Gastrocnemius medialis (tissue), 4 donors: ENCODE measurements at regions of chr4 and their contacts with region 1.

Region 1: GRCh38 chr4:38574559-38575333 is 89.3 kb upstream of the KLF3 start:
- DNase-seq: peak; percentile 81 to 90
- ATAC-seq: peak; percentile 97 to 98
- H3K4me3 ChIP-seq: peak overlapping the region in 3 of 4 donors; percentile 30 to 37 (median 30)
- H3K27ac ChIP-seq: peak overlapping the region; percentile 80 to 91 (median 85)
- H3K4me1 ChIP-seq: peaks cover 0 to 14% of the 10 kb centered on the region in 2 donors
- H3K27me3 ChIP-seq: no peaks in the 10 kb centered on the region
- CTCF ChIP-seq: no peak
- POLR2A ChIP-seq: no peak

Region 2: DNA sequence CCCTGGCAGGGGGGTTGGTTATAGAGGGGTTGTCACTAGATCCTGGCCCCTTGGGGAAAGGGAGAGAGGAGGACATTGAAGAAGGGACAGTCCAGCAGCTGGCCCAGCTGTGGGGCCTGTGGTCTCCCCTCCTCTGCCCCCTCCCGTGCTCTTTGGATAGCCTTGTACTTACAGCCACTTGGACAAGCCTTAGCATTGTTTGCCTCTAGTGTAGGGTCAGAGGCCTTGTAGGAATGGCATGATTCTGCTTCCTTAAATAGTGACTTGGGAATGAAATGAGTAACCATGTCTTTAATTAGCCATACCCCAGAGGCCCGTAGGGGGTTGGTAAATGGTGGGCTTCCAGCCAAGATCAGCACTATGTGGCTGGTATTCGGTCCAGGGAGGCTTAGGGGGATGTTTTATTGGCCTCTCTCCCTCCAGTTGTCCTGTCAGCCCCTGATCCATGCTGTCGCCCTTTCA is 384.0 kb before region 1 on chr4:
- in situ Hi-C with region 1: no loop called
- intact Hi-C with region 1: loop called (anchors 10 kb)
- DNase-seq: peak in 1 of 2 donors; percentile 39
- ATAC-seq: peak; percentile 98 to 99
- H3K4me3 ChIP-seq: no peak overlapping the region
- H3K27ac ChIP-seq: peak overlapping the region; percentile 60 to 75 (median 66)
- H3K4me1 ChIP-seq: peaks cover 15 to 16% of the 10 kb centered on the region in 2 donors
- H3K27me3 ChIP-seq: no peaks in the 10 kb centered on the region
- CTCF ChIP-seq: no peak
- POLR2A ChIP-seq: no peak

Region 3: DNA sequence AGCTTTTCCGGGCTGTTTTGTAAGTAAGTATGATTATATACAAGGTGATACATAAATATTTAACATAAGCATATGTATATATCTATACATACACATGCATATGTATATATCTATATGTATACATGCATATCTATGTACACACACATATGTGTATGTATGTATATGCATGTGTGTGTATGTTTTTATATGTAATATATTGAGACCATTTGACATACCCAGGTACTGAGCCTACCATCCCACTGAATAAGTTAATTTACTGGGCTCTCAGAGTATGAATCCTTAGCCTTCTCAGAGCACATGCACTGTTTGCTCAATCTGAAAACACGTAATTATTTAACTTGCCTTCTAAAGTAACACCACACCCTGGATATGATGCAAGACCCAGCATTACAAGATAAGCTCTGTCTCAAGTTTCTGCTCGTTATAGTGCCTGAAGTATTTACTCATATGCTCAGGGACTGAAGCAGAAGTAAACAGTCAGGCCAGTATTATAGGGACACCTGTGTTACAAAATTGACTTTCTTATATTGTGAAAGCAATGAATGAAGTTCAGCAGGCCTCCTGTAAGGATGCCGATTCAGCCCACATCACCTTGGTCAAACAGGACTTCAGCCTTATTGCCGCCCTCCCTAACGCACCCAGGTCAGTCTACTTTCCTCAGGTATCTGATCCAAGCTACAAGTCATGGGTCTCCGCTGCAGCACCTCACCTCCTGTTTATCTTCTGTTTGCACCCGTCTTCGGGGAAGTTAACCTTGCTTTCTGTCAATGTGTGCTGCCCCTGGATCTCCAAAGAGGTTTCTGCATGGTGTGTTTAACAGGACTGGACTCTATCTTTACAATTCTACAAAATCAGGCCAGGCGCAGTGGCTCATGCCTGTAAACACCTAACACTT is 46.3 kb after region 1 on chr4:
- in situ Hi-C with region 1: no loop called
- intact Hi-C with region 1: loop called (anchors 1 kb)
- DNase-seq: peak; percentile 37 to 64
- ATAC-seq: peak; percentile 98 to 99
- H3K4me3 ChIP-seq: no peak overlapping the region
- H3K27ac ChIP-seq: peak overlapping the region; percentile 64 to 86 (median 74)
- H3K4me1 ChIP-seq: peaks cover 13 to 17% of the 10 kb centered on the region in 2 donors
- H3K27me3 ChIP-seq: no peaks in the 10 kb centered on the region
- CTCF ChIP-seq: peak in 1 of 5 experiments; percentile 15
- POLR2A ChIP-seq: peak in 1 of 2 donors; percentile 23

Region 4: GRCh38 chr4:38663801-38664705 is 89.3 kb after region 1 on chr4 and contains the start of gene KLF3:
- in situ Hi-C with region 1: no loop called
- intact Hi-C with region 1: loop called (anchors 1 kb)
- DNase-seq: peak; percentile 88 to 92
- ATAC-seq: peak; percentile 65 to 70
- H3K4me3 ChIP-seq: peak within 1 kb of the TSS; percentile 94 to 99 (median 98)
- H3K27ac ChIP-seq: peak within 1 kb of the TSS; percentile 97 to 100 (median 98)
- H3K4me1 ChIP-seq: peaks cover 38 to 44% of the 10 kb centered on the region in 2 donors
- H3K27me3 ChIP-seq: no peaks in the 10 kb centered on the region
- CTCF ChIP-seq: no peak
- POLR2A ChIP-seq: peak; percentile 93 to 95
- total RNA-seq, gene KLF3: 12.7 to 26.5 (median 19.4) TPM